A549 (cell line): ENCODE measurements at regions of chr17 and their contacts with region 1.

Region 1: GRCh38 chr17:7136266-7136877 is 21.8 kb upstream of the ASGR2 start:
- DNase-seq: peak; percentile 72 to 77
- ATAC-seq: peak; percentile 60 to 73; a peak in 3 of 6 replicates
- H3K4me3 ChIP-seq: peak overlapping the region; percentile 31
- H3K27ac ChIP-seq: peak overlapping the region; percentile 19 to 73
- H3K4me1 ChIP-seq: peaks cover 4% of the 10 kb centered on the region; the same call in 2 of the 3 replicates
- CTCF ChIP-seq: peak; percentile 99
- EP300 ChIP-seq: no peak
- POLR2A ChIP-seq: no peak
- RAD21 ChIP-seq: peak; percentile 99

Region 2: GRCh38 chr17:7072406-7072805 is 64.0 kb before region 1 on chr17:
- CTCF ChIA-PET with region 1: interaction called, 1,477 read pairs
- POLR2A ChIA-PET with region 1: no interaction called
- DNase-seq: no peak
- ATAC-seq: no peak
- H3K4me3 ChIP-seq: no peak overlapping the region
- H3K27ac ChIP-seq: no peak overlapping the region
- H3K4me1 ChIP-seq: no peaks in the 10 kb centered on the region
- CTCF ChIP-seq: no peak
- EP300 ChIP-seq: no peak
- POLR2A ChIP-seq: no peak
- RAD21 ChIP-seq: no peak

Region 3: DNA sequence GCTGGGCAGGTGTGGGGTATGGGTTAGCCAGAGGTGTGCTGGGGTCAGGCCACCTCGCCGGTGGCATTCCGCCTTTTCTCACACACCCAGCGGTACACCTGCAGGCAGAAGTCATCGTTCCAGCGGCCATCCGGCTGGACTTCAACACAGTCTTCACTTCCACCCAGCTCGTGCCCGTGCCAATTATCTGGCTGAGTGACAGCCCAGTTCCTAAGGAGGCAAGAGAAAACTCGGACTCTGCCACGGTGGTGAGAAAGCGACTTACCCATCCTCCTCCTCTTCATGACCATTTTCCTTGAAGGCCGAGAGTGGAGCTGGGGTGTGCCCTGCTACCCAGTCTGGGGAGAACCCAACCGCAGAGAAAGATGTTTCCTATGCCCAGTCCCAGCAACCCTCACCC is 34.8 kb before region 1 on chr17:
- CTCF ChIA-PET with region 1: interaction called, 17 read pairs
- POLR2A ChIA-PET with region 1: interaction called, 7 read pairs
- DNase-seq: no peak
- ATAC-seq: peak in 1 of 2 experiments; percentile 16; a peak in 3 of 6 replicates
- H3K4me3 ChIP-seq: no peak overlapping the region
- H3K27ac ChIP-seq: no peak overlapping the region
- H3K4me1 ChIP-seq: peaks cover 6% of the 10 kb centered on the region
- CTCF ChIP-seq: no peak
- EP300 ChIP-seq: no peak
- POLR2A ChIP-seq: no peak
- RAD21 ChIP-seq: no peak

Region 4: GRCh38 chr17:7114875-7115614 is 21.3 kb before region 1 on chr17:
- CTCF ChIA-PET with region 1: interaction called, 91 read pairs
- POLR2A ChIA-PET with region 1: no interaction called
- DNase-seq: no peak
- ATAC-seq: no peak
- H3K4me3 ChIP-seq: no peak overlapping the region
- H3K27ac ChIP-seq: peak overlapping the region; percentile 17 to 36; a peak in 2 of 6 replicates
- H3K4me1 ChIP-seq: peaks cover 9% of the 10 kb centered on the region; the same call in 2 of the 3 replicates
- CTCF ChIP-seq: no peak
- EP300 ChIP-seq: no peak
- POLR2A ChIP-seq: no peak
- RAD21 ChIP-seq: no peak

Region 5: GRCh38 chr17:7156342-7156940 is 20.1 kb after region 1 on chr17:
- CTCF ChIA-PET with region 1: interaction called, 27 read pairs
- POLR2A ChIA-PET with region 1: no interaction called
- DNase-seq: no peak
- ATAC-seq: no peak
- H3K4me3 ChIP-seq: no peak overlapping the region
- H3K27ac ChIP-seq: no peak overlapping the region
- H3K4me1 ChIP-seq: no peaks in the 10 kb centered on the region
- CTCF ChIP-seq: no peak
- EP300 ChIP-seq: no peak
- POLR2A ChIP-seq: no peak
- RAD21 ChIP-seq: no peak

Region 6: GRCh38 chr17:7177196-7177953 is 41.0 kb after region 1 on chr17:
- CTCF ChIA-PET with region 1: interaction called, 78 read pairs
- POLR2A ChIA-PET with region 1: no interaction called
- DNase-seq: peak; percentile 72 to 95
- ATAC-seq: peak; percentile 84 to 92
- H3K4me3 ChIP-seq: peak overlapping the region; percentile 54
- H3K27ac ChIP-seq: peak overlapping the region; percentile 67 to 88
- H3K4me1 ChIP-seq: peaks cover 23% of the 10 kb centered on the region
- CTCF ChIP-seq: peak; percentile 88
- EP300 ChIP-seq: no peak
- POLR2A ChIP-seq: no peak
- RAD21 ChIP-seq: peak; percentile 90 to 94